Sigmoid colon (tissue), 7 donors: ENCODE measurements at regions of chr19 and their contacts with region 1.

Region 1: GRCh38 chr19:34171877-34172660 is at the start of gene LSM14A:
- DNase-seq: peak; percentile 97
- H3K4me3 ChIP-seq: peak within 1 kb of the TSS; percentile 57 to 98 (median 76)
- H3K27ac ChIP-seq: peak within 1 kb of the TSS; percentile 90 to 100 (median 98)
- H3K4me1 ChIP-seq: peaks cover 0 to 48% (median 44%) of the 10 kb centered on the region in 4 donors
- H3K27me3 ChIP-seq: no peaks in the 10 kb centered on the region
- CTCF ChIP-seq: no peak
- EP300 ChIP-seq: no peak
- POLR2A ChIP-seq: peak; percentile 24 to 28
- total RNA-seq, gene LSM14A: 104 to 149 (median 123) TPM

Region 2: GRCh38 chr19:33795370-33796163 is 376.5 kb before region 1 on chr19:
- intact Hi-C with region 1: loop called (anchors 2 kb)
- DNase-seq: peak; percentile 88
- H3K4me3 ChIP-seq: peak overlapping the region; percentile 55 to 95 (median 89)
- H3K27ac ChIP-seq: peak overlapping the region; percentile 94 to 97 (median 96)
- H3K4me1 ChIP-seq: peaks cover 0 to 30% (median 25%) of the 10 kb centered on the region in 4 donors
- H3K27me3 ChIP-seq: no peaks in the 10 kb centered on the region
- CTCF ChIP-seq: peak in 3 of 4 experiments; percentile 65 to 87 (median 68)
- EP300 ChIP-seq: no peak
- POLR2A ChIP-seq: peak in 1 of 2 donors; percentile 21

Region 3: DNA sequence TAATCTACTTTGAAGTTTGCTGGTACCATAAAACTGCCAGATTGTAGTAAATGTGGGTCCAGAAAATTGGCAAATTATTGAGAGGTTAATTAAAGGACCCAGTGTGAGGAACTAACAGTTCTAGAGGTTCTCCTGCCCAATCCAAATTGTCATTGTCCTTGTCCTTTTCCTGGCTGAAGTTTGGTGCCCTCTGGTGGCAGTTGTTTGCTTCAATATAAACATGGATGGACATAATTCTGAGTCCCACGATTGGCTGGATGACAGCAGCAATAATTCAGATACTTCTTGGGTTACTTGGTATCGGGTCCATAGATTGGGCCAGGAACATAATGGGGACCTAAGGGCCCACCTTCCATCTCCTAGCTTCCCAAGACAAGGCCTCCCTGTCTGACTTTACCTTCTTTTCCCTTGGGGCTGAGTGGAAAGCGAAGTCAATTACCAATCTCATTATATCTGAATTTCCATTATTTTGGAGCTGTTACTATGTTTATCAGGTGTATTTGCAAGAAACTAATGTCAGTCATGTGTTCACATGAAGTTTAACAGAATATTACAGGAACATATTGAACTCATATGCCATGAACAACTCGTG is 48.5 kb after region 1 on chr19:
- intact Hi-C with region 1: loop called (anchors 2 kb)
- DNase-seq: peak; percentile 69
- H3K4me3 ChIP-seq: no peak overlapping the region
- H3K27ac ChIP-seq: no peak overlapping the region
- H3K4me1 ChIP-seq: peaks cover 0 to 15% (median 12%) of the 10 kb centered on the region in 4 donors
- H3K27me3 ChIP-seq: no peaks in the 10 kb centered on the region
- CTCF ChIP-seq: peak in 3 of 4 experiments; percentile 46 to 66 (median 49)
- EP300 ChIP-seq: no peak
- POLR2A ChIP-seq: no peak

Region 4: GRCh38 chr19:34336781-34337271 is 164.8 kb after region 1 on chr19:
- intact Hi-C with region 1: loop called (anchors 10 kb)
- DNase-seq: no peak
- H3K4me3 ChIP-seq: no peak overlapping the region
- H3K27ac ChIP-seq: no peak overlapping the region
- H3K4me1 ChIP-seq: no peaks in the 10 kb centered on the region
- H3K27me3 ChIP-seq: no peaks in the 10 kb centered on the region
- CTCF ChIP-seq: peak; percentile 7 to 49 (median 38)
- EP300 ChIP-seq: no peak
- POLR2A ChIP-seq: no peak